OCI-LY7 (cell line): ENCODE measurements at regions of chr20 and their contacts with region 1.

Region 1: GRCh38 chr20:1466211-1467081 is at the start of gene NSFL1C:
- DNase-seq: peak; percentile 96
- H3K4me3 ChIP-seq: peak within 1 kb of the TSS; percentile 85
- H3K27ac ChIP-seq: peak within 1 kb of the TSS; percentile 46
- H3K4me1 ChIP-seq: peaks cover 35% of the 10 kb centered on the region
- CTCF ChIP-seq: peak; percentile 85
- total RNA-seq, gene NSFL1C: 40.2 and 49.6 TPM in 2 replicates

Region 2: GRCh38 chr20:1118336-1119127 is 347.9 kb before region 1 on chr20 and contains the start of gene PSMF1:
- CTCF ChIA-PET with region 1: no interaction called
- POLR2A ChIA-PET with region 1: no interaction called
- intact Hi-C with region 1: loop called (anchors 1 kb)
- DNase-seq: peak; percentile 97
- H3K4me3 ChIP-seq: peak within 1 kb of the TSS; percentile 96
- H3K27ac ChIP-seq: peak within 1 kb of the TSS; percentile 53
- H3K4me1 ChIP-seq: peaks cover 41% of the 10 kb centered on the region
- CTCF ChIP-seq: no peak
- total RNA-seq, gene PSMF1: 31.7 and 34.7 TPM in 2 replicates

Region 3: DNA sequence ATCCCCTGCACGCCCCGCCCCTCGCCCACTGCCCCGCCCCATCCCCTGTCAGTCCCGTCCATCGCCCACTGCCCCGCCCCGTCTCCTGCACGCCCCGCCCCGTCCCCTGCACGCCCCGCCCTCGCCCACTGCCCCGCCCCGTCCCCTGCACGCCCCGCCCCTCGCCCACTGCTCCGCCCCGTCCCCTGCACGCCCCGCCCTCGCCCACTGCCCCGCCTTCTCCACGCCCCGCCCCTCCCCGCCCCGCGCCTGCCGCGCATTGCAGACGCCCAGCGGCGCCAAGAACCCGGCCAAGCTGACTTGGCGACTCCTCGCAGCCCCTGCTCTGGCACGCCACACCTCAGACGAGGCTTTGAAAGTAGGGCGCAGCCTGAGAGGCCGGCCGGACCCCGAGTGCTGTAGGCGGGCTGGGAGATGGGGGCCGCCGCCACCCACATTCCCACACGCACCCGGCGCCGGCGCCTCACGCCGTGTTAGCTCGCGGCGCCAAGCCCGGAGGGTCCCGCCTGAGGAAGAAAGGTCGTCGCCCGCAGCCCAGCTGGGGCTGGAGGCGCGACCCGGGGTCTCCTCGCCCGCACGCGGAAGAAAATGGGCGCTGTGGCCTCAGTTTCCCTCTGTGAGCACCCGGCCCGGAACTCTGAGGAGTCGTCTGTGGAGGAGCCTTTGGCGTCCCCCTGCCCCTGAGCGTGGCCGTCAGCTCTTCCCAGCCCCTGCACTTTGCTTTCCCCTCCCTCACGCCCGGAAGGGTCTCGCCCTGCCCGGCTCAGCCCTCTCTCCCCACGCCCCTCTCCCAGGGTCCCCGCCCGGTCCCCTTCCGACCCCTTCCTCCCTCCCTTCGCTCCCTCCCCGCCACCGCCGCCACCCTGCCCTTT is 240.4 kb before region 1 on chr20 and contains the start of gene RAD21L1:
- CTCF ChIA-PET with region 1: no interaction called
- POLR2A ChIA-PET with region 1: no interaction called
- intact Hi-C with region 1: loop called (anchors 10 kb)
- DNase-seq: peak; percentile 24
- H3K4me3 ChIP-seq: peak within 1 kb of the TSS; percentile 43
- H3K27ac ChIP-seq: no peak within 1 kb of the TSS
- H3K4me1 ChIP-seq: no peaks in the 10 kb centered on the region
- CTCF ChIP-seq: no peak
- total RNA-seq, gene RAD21L1: not detected in 2 replicates

Region 4: GRCh38 chr20:1313236-1313964 is 153.0 kb before region 1 on chr20:
- CTCF ChIA-PET with region 1: no interaction called
- POLR2A ChIA-PET with region 1: no interaction called
- intact Hi-C with region 1: loop called (anchors 10 kb)
- DNase-seq: peak; percentile 58
- H3K4me3 ChIP-seq: no peak overlapping the region
- H3K27ac ChIP-seq: no peak overlapping the region
- H3K4me1 ChIP-seq: peaks cover 4% of the 10 kb centered on the region
- CTCF ChIP-seq: peak; percentile 98